ENCODE measurements at regions of chr3 and their contacts with region 1.

Region 1: DNA sequence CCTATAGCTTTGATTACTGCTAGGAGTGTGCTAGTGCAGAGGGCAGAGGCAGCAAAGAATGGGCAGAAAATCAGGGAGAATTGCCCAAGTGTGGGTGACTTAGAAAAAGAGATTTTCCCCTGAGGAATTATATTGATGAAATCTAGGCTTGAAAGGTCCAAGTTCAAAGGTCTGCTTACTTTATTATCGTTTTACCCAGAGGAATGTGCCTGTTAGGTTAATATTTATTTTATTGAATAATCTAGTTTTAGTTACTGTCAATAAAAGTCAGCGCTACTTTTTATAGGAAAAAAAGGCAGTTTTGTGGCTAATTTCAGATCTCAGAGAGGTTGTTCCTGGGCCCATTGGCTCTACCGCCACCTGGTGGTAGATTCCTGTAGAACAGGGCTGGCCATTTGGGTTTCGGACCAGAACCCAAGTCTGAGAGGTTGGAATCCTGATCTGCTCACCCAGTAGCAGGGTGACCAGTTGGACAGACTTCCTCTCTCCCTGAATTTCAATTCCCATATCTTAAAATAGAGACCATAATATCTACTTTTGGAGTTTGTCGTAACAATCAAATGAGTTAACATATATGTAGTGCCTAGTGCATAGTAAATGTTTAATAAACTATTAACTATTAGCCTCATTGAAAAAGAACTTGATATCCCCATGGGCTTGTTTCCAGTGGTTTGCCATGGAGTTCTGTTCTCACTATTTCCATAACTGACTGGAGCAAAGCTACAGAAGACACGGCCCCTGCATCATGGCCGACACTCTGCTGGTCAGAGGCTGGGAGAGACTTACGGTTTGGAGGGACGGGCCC is 62.7 kb upstream of the ZNF148 start:
- DNase-seq: peak; percentile 73
- H3K4me3 Mint-ChIP-seq: no peak overlapping the region
- H3K27ac Mint-ChIP-seq: no peak overlapping the region
- H3K4me1 Mint-ChIP-seq: no peaks in the 10 kb centered on the region
- H3K27me3 Mint-ChIP-seq: no peaks in the 10 kb centered on the region
- CTCF ChIP-seq: peak; percentile 97

Region 2: GRCh38 chr3:124995460-124995994 is 442.3 kb before region 1 on chr3:
- CTCF ChIA-PET with region 1: interaction called, 13 read pairs
- intact Hi-C with region 1: loop called (anchors 1 kb)
- DNase-seq: peak; percentile 61
- H3K4me3 Mint-ChIP-seq: no peak overlapping the region
- H3K27ac Mint-ChIP-seq: no peak overlapping the region
- H3K4me1 Mint-ChIP-seq: no peaks in the 10 kb centered on the region
- H3K27me3 Mint-ChIP-seq: peaks cover 10% of the 10 kb centered on the region
- CTCF ChIP-seq: peak; percentile 55

Region 3: GRCh38 chr3:125072301-125072700 is 365.5 kb before region 1 on chr3:
- CTCF ChIA-PET with region 1: no interaction called
- intact Hi-C with region 1: no loop called
- DNase-seq: no peak
- H3K4me3 Mint-ChIP-seq: no peak overlapping the region
- H3K27ac Mint-ChIP-seq: no peak overlapping the region
- H3K4me1 Mint-ChIP-seq: no peaks in the 10 kb centered on the region
- H3K27me3 Mint-ChIP-seq: peaks cover 8% of the 10 kb centered on the region
- CTCF ChIP-seq: no peak

Region 4: DNA sequence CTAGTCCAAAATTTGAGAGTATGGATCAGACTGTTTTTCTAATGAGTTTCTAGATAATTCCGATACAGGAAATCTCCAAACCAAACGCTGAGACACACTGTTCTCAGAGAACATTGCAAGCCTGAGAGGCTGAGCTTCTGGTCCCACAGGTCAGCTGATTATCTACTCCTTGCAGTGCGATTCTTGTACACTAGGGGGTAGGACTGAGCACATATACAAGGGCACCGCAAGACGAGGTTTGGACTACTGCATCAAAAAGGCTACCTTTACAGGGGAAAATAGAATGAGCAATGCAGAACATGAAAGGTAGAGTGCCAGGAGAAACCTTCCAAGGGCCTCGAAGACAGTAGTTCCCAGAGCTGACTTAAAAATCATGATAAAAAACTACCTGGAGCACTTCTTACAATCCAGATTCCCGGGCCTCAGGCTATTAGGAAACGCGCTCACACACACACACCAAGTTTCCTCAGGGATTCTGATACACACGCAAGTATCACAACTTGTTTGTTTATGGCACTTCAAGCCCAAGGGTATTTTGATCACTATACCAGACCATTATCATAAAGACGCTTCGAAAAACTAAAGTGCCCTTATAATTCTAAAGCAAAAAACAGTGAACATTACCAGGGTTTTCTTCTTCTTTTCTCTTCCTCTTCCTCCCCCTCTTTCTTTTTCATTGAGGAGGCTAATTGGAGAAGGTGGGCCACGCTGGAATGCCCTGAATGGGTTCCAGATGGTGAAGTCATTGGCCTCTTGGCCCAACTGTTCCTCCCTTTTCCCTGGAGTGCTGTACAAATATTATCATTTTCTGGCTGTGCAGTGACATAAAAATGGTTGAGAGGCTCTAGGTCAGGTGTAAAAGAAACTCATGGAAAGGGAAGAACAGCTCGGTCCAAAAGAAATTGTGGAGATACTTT is 287.1 kb before region 1 on chr3:
- CTCF ChIA-PET with region 1: interaction called, 4 read pairs
- intact Hi-C with region 1: loop called (anchors 10 kb)
- DNase-seq: peak; percentile 73
- H3K4me3 Mint-ChIP-seq: no peak overlapping the region
- H3K27ac Mint-ChIP-seq: no peak overlapping the region
- H3K4me1 Mint-ChIP-seq: no peaks in the 10 kb centered on the region
- H3K27me3 Mint-ChIP-seq: no peaks in the 10 kb centered on the region
- CTCF ChIP-seq: peak; percentile 73

Region 5: DNA sequence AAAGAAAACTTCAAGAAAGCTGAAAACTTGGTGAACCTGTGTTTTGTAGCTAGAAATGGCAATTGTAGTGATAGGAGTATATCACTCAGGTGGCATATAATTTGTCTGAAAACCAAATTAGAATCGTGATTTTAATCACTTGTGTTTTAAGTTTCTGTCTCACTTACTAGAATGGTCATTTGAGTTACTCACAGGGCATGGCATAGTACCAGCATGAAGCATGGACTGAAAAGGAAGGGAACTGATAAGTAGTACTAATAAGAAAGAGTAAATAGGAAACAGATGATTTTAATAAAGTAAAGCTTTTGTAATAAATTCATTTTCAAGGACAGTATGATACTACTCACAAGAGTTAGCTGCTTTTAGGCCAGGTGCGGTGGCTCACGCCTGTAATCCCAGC is 135.4 kb after region 1 on chr3:
- CTCF ChIA-PET with region 1: no interaction called
- intact Hi-C with region 1: no loop called
- DNase-seq: no peak
- H3K4me3 Mint-ChIP-seq: no peak overlapping the region
- H3K27ac Mint-ChIP-seq: no peak overlapping the region
- H3K4me1 Mint-ChIP-seq: no peaks in the 10 kb centered on the region
- H3K27me3 Mint-ChIP-seq: no peaks in the 10 kb centered on the region
- CTCF ChIP-seq: no peak